SK-N-SH (cell line): ENCODE measurements at regions of chr9 and their contacts with region 1.

Region 1: GRCh38 chr9:124126571-124127289 is 115.2 kb downstream of the LHX2 start:
- DNase-seq: peak; percentile 84
- H3K4me3 ChIP-seq: peak overlapping the region in 1 of 2 experiments; percentile 2; a peak in 1 of 4 replicates
- H3K27ac ChIP-seq: no peak overlapping the region
- H3K4me1 ChIP-seq: no peaks in the 10 kb centered on the region
- H3K27me3 ChIP-seq: no peaks in the 10 kb centered on the region; the same call in 1 of the 2 replicates
- CTCF ChIP-seq: peak; percentile 95
- EP300 ChIP-seq: no peak
- RAD21 ChIP-seq: peak; percentile 83

Region 2: GRCh38 chr9:124011420-124012301 is 115.1 kb before region 1 on chr9 and contains the start of gene LHX2:
- CTCF ChIA-PET with region 1: no interaction called
- POLR2A ChIA-PET with region 1: no interaction called
- DNase-seq: peak; percentile 90
- H3K4me3 ChIP-seq: peak within 1 kb of the TSS in 1 of 2 experiments; percentile 17; a peak in 2 of 4 replicates
- H3K27ac ChIP-seq: no peak within 1 kb of the TSS
- H3K4me1 ChIP-seq: peaks cover 0 to 9% of the 10 kb centered on the region in 2 experiments; a peak in 1 of 4 replicates
- H3K27me3 ChIP-seq: peaks cover 94% of the 10 kb centered on the region
- CTCF ChIP-seq: no peak; the same call in 1 of the 2 replicates
- EP300 ChIP-seq: no peak
- RAD21 ChIP-seq: no peak
- polyA plus RNA-seq, gene LHX2: not detected in 2 replicates

Region 3: GRCh38 chr9:124137009-124137943 is 10.5 kb after region 1 on chr9:
- CTCF ChIA-PET with region 1: interaction called, 11 read pairs
- POLR2A ChIA-PET with region 1: no interaction called
- DNase-seq: no peak
- H3K4me3 ChIP-seq: no peak overlapping the region
- H3K27ac ChIP-seq: no peak overlapping the region
- H3K4me1 ChIP-seq: no peaks in the 10 kb centered on the region
- H3K27me3 ChIP-seq: no peaks in the 10 kb centered on the region
- CTCF ChIP-seq: no peak
- EP300 ChIP-seq: no peak
- RAD21 ChIP-seq: no peak

Region 4: DNA sequence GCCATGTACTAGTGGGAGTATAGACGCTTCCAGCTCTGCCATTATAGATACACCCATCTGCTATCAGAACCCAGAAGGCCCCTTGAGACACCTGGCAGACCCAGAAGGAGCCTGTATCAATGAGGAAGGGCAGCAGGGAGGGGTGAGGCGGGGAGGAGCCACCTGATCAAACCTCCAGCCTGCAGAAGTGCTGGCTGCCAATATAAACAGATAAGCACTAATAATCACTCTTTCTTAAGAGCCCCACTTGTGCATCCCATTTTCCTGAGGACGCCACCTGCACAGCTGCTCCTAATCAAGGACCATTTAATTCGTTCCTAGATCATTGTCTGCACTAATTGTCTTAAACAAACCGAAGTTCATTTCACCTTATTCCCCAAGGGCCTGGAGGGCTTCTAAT is 56.0 kb after region 1 on chr9:
- CTCF ChIA-PET with region 1: interaction called, 10 read pairs
- POLR2A ChIA-PET with region 1: no interaction called
- DNase-seq: no peak
- H3K4me3 ChIP-seq: no peak overlapping the region
- H3K27ac ChIP-seq: no peak overlapping the region
- H3K4me1 ChIP-seq: peaks cover 0 to 5% of the 10 kb centered on the region in 2 experiments; a peak in 1 of 4 replicates
- H3K27me3 ChIP-seq: peaks cover 59% of the 10 kb centered on the region; the same call in 1 of the 2 replicates
- CTCF ChIP-seq: no peak
- EP300 ChIP-seq: no peak
- RAD21 ChIP-seq: no peak

Region 5: GRCh38 chr9:124381170-124381945 is 254.6 kb after region 1 on chr9:
- CTCF ChIA-PET with region 1: interaction called, 27 read pairs
- POLR2A ChIA-PET with region 1: no interaction called
- DNase-seq: no peak
- H3K4me3 ChIP-seq: no peak overlapping the region
- H3K27ac ChIP-seq: no peak overlapping the region
- H3K4me1 ChIP-seq: peaks cover 6 to 9% of the 10 kb centered on the region in 2 experiments; a peak in 3 of 4 replicates
- H3K27me3 ChIP-seq: no peaks in the 10 kb centered on the region
- CTCF ChIP-seq: no peak
- EP300 ChIP-seq: no peak
- RAD21 ChIP-seq: no peak

Region 6: GRCh38 chr9:125143375-125144090 is 1016.8 kb after region 1 on chr9 and contains the start of gene SCAI:
- CTCF ChIA-PET with region 1: no interaction called
- POLR2A ChIA-PET with region 1: no interaction called
- DNase-seq: peak; percentile 98
- H3K4me3 ChIP-seq: peak within 1 kb of the TSS; percentile 64 to 74
- H3K27ac ChIP-seq: peak within 1 kb of the TSS in 1 of 2 experiments; percentile 65; a peak in 2 of 4 replicates
- H3K4me1 ChIP-seq: peaks cover 0 to 5% of the 10 kb centered on the region in 2 experiments; a peak in 2 of 4 replicates
- H3K27me3 ChIP-seq: no peaks in the 10 kb centered on the region
- CTCF ChIP-seq: peak; percentile 97
- EP300 ChIP-seq: no peak; a peak in 1 of 4 replicates
- RAD21 ChIP-seq: peak; percentile 87
- polyA plus RNA-seq, gene SCAI: 0.85 and 1.2 TPM in 2 replicates